Esophagus squamous epithelium (tissue), 5 donors: ENCODE measurements at regions of chr2 and their contacts with region 1.

Region 1: DNA sequence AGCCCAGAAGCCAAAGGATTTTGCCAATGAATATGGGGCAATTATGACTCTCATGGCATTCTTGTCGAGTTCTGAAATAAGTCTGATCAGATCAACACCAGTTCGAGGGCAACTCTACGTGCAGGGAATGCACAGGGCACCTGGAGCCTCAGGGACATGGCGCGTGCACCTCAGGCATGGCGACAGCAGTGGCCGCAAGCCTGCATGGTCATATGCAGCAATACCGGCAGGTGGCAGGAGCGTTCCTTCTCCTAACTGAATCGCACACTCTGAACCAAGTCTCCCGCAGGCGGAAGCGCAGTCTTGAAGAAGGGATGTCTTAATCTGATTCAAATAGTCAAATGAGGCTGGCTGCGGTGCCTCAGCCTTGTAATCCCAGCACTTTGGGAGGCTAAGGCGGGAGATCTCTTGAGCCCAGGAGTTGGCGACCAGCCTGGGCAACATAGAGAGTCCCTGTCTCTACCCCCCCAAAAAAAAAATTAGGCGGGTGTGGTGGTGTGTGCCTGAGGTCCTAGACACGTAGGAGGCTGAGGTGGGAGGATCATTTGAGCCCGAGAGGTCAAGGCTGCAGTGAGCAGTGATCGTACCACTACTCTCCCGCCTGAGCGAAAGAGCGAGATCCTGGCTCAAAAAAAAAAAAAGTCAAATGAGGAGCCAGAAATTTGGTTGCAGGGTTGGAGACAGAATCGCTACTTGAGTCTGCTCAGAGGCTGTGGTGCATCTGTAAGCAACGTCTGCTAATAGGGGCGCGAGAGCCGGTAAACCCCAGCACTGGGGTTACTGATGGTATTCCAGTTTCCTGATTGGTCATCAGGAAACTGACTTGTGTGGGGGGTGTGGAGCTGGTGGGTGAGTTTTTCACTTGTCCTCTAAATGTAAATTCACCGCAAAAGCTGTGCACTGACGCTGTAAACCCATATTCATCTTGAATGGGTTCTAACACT is 28.8 kb downstream of the FHL2 start:
- DNase-seq: peak; percentile 21
- H3K4me3 ChIP-seq: peak overlapping the region in 1 of 4 donors; percentile 6
- H3K27ac ChIP-seq: peak overlapping the region in 3 of 4 donors; percentile 87 to 95 (median 87)
- H3K4me1 ChIP-seq: peaks cover 11 to 68% (median 49%) of the 10 kb centered on the region in 3 donors
- H3K27me3 ChIP-seq: no peaks in the 10 kb centered on the region
- CTCF ChIP-seq: peak; percentile 77 to 96 (median 94)
- POLR2A ChIP-seq: no peak

Region 2: GRCh38 chr2:104690255-104690984 is 679.6 kb before region 1 on chr2:
- intact Hi-C with region 1: no loop called
- DNase-seq: no peak
- H3K4me3 ChIP-seq: no peak overlapping the region
- H3K27ac ChIP-seq: no peak overlapping the region
- H3K4me1 ChIP-seq: no peaks in the 10 kb centered on the region
- H3K27me3 ChIP-seq: no peaks in the 10 kb centered on the region
- CTCF ChIP-seq: no peak
- POLR2A ChIP-seq: no peak

Region 3: DNA sequence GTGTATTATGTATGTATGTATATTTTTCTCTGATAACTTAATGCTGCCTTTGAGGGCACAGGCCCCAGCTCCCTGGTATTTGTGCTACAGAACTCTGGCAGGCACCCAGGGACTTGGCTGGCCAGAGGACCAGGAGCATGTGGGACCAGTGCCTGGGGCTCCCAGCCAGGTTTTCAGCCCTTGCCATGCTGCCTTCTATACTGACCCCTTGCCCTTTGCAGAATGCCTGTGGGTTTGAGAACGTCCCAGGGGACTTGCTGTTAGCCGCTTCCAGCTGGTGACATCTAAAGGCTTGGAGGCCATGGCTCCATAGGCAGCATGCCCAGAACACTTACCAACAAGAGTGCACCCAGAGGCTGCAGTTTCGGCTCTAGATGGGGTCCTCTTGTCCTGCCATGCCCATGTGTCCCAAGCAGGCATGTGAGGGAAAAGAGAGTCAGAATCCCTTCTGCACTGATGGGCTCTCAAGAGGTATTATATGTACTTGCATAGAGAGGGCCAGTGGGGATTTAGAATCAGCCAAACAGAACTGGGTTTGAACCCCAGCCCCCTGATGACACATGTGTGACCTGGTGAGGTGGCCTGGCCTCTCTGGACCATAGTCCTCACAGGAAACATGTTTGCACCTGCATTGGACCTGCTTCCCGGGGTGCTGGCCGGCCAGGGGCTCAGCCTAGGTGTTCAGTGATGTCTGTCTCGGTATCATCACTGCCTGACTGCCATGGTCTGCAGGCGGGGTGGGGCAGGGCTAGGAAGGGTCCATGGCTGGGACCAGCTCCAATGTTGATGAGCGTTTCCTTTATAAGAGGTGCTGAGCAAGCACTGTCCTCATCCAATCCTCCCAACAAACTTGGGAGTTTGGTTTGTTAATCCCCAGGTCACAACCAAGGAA is 148.0 kb after region 1 on chr2:
- intact Hi-C with region 1: loop called (anchors 5 kb)
- DNase-seq: no peak
- H3K4me3 ChIP-seq: no peak overlapping the region
- H3K27ac ChIP-seq: peak overlapping the region in 2 of 4 donors; percentile 25 to 59
- H3K4me1 ChIP-seq: peaks cover 7 to 40% (median 12%) of the 10 kb centered on the region in 3 donors
- H3K27me3 ChIP-seq: no peaks in the 10 kb centered on the region
- CTCF ChIP-seq: no peak
- POLR2A ChIP-seq: no peak